GM23248 (cell line): ENCODE measurements at regions of chr16 and their contacts with region 1.

Region 1: DNA sequence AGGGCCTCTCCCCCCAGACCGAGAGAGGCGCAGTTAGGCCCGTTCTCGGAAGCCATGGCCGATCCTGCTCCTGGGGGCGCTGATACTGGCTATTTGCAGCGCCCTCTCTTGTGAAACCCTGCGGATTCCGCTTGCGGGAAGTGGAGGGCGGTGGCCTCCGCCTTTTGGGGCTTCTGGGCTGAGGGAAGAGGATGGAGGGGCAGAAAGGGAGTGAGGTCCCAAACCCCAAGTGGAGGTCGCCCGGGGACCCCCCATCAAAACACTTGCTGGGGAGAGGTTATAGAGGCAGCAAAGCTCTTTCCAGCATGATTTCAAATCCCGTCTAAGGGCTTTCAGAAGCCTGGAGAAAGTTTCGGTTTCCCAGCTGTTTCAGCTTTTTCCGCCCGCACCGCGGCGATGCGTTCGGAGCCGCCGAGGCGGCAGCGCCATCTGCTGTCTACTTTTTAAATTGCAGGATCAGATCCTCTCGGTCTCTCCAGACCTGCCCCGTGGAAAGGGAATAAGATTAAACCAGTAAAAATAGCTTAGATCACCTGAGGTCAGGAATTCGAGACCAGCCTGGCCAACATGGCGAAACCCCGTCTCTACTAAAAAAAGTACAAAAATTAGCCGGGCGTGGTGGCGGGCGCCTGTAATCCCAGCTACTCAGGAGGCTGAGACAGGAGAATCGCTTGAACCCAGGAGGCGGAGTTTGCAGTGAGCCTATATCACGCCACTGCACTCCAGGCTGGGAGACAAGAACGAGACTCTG is 15.8 kb downstream of the SNX20 start:
- DNase-seq: peak; percentile 87
- H3K4me3 ChIP-seq: peak overlapping the region; percentile 82
- H3K27ac ChIP-seq: no peak overlapping the region
- H3K4me1 ChIP-seq: no peaks in the 10 kb centered on the region
- H3K27me3 ChIP-seq: no peaks in the 10 kb centered on the region

Region 2: GRCh38 chr16:50326949-50327402 is 338.3 kb before region 1 on chr16:
- in situ Hi-C with region 1: no loop called
- DNase-seq: peak; percentile 73
- H3K4me3 ChIP-seq: no peak overlapping the region
- H3K27ac ChIP-seq: 0 out of 2 replicates have a peak overlapping the region, but pooled peaks have one; percentile 13
- H3K4me1 ChIP-seq: peaks cover 8% of the 10 kb centered on the region
- H3K27me3 ChIP-seq: no peaks in the 10 kb centered on the region

Region 3: GRCh38 chr16:50371936-50372595 is 293.2 kb before region 1 on chr16:
- in situ Hi-C with region 1: loop called (anchors 5 kb)
- DNase-seq: peak; percentile 55
- H3K4me3 ChIP-seq: no peak overlapping the region
- H3K27ac ChIP-seq: no peak overlapping the region
- H3K4me1 ChIP-seq: peaks cover 7% of the 10 kb centered on the region
- H3K27me3 ChIP-seq: no peaks in the 10 kb centered on the region

Region 4: GRCh38 chr16:50887500-50888298 is 222.4 kb after region 1 on chr16:
- in situ Hi-C with region 1: no loop called
- DNase-seq: no peak
- H3K4me3 ChIP-seq: no peak overlapping the region
- H3K27ac ChIP-seq: no peak overlapping the region
- H3K4me1 ChIP-seq: no peaks in the 10 kb centered on the region
- H3K27me3 ChIP-seq: no peaks in the 10 kb centered on the region